ENCODE measurements at regions of chr19 and their contacts with region 1.

Region 1: GRCh38 chr19:46271481-46272197 is 25.2 kb upstream of the HIF3A start:
- DNase-seq: no peak
- ATAC-seq: no peak

Region 2: DNA sequence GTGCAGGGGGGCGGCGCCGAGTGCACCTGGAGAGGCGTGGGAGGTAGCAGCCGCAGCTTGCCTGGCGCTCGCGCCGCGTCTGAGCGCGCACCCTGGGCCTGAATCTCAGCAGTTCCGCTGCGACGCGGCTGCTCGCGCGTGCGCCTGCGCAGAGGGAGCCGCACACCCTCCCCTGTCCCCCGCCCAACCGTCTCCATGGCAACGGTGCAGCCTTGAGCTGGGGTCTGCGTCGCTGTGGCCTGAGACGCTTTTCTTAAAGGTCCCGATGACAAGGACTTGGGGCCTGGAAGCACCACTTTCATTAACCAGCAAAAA is 224.1 kb after region 1 on chr19 and contains the start of gene PNMA8B:
- intact Hi-C with region 1: loop called (anchors 10 kb)
- DNase-seq: peak; percentile 82
- ATAC-seq: peak; percentile 66
- total RNA-seq, gene PNMA8B: 0.65 TPM